PC-9 (cell line): ENCODE measurements at regions of chr17 and their contacts with region 1.

Region 1: GRCh38 chr17:16285957-16286640 is 67.2 kb downstream of the CENPV start:
- DNase-seq: peak; percentile 91 to 94
- H3K4me3 ChIP-seq: peak overlapping the region; percentile 45; the same call in 1 of the 2 replicates
- H3K27ac ChIP-seq: peak overlapping the region; percentile 98
- H3K4me1 ChIP-seq: peaks cover 75% of the 10 kb centered on the region
- H3K27me3 ChIP-seq: no peaks in the 10 kb centered on the region
- CTCF ChIP-seq: peak; percentile 71; the same call in 1 of the 2 replicates

Region 2: GRCh38 chr17:15659663-15660062 is 626.4 kb before region 1 on chr17:
- CTCF ChIA-PET with region 1: no interaction called
- POLR2A ChIA-PET with region 1: no interaction called
- intact Hi-C with region 1: loop called (anchors 5 kb)
- DNase-seq: peak; percentile 96 to 97
- H3K4me3 ChIP-seq: no peak overlapping the region; the same call in 1 of the 2 replicates
- H3K27ac ChIP-seq: peak overlapping the region; percentile 98
- H3K4me1 ChIP-seq: peaks cover 55% of the 10 kb centered on the region
- H3K27me3 ChIP-seq: no peaks in the 10 kb centered on the region
- CTCF ChIP-seq: no peak

Region 3: DNA sequence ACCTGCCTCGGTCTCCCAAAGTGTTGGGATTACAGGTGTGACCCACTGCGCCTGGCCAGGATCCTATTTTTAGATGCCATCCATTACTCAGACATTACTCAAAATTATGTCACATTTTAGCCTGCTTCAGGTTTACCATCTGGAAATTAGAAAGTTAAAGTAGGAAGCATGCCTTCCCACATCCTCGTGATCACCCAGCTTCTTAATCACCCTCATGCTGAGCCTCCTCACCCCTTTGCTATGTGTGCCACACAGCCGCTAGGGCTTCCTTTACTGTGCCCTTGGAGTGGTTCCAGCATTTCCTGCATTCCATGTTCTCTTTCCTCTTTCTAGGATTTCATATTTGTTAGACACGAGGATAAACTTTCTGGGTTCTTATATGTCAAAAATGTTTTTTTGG is 331.9 kb before region 1 on chr17:
- CTCF ChIA-PET with region 1: no interaction called
- POLR2A ChIA-PET with region 1: no interaction called
- intact Hi-C with region 1: loop called (anchors 5 kb)
- DNase-seq: peak; percentile 81 to 91
- H3K4me3 ChIP-seq: no peak overlapping the region
- H3K27ac ChIP-seq: peak overlapping the region; percentile 71
- H3K4me1 ChIP-seq: peaks cover 48% of the 10 kb centered on the region
- H3K27me3 ChIP-seq: no peaks in the 10 kb centered on the region
- CTCF ChIP-seq: no peak

Region 4: GRCh38 chr17:16297367-16298139 is 11.5 kb after region 1 on chr17:
- CTCF ChIA-PET with region 1: no interaction called
- POLR2A ChIA-PET with region 1: interaction called, 10 read pairs
- intact Hi-C with region 1: no loop called
- DNase-seq: no peak
- H3K4me3 ChIP-seq: no peak overlapping the region
- H3K27ac ChIP-seq: no peak overlapping the region
- H3K4me1 ChIP-seq: peaks cover 12% of the 10 kb centered on the region
- H3K27me3 ChIP-seq: no peaks in the 10 kb centered on the region
- CTCF ChIP-seq: no peak

Region 5: DNA sequence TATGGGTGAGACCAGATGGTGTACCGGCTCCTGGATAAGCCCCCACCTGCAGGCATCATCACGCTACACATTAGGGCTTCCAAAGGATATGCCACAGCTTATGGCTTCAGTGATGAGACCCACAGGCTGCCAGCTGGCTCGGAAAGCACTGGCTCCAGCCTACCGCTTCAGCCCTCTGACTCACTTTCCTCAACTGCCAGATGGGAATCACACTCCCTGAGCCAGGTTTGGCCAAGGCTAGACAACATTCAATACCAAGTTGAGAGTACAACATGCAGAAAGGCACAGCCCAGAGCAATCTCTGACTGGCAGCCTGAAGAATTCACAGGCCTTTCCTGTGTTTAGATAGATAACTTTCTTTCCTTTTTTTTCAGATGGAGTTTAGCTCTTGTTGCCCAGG is 56.9 kb after region 1 on chr17:
- CTCF ChIA-PET with region 1: no interaction called
- POLR2A ChIA-PET with region 1: no interaction called
- intact Hi-C with region 1: no loop called
- DNase-seq: no peak
- H3K4me3 ChIP-seq: no peak overlapping the region
- H3K27ac ChIP-seq: no peak overlapping the region
- H3K4me1 ChIP-seq: no peaks in the 10 kb centered on the region
- H3K27me3 ChIP-seq: no peaks in the 10 kb centered on the region
- CTCF ChIP-seq: no peak

Region 6: GRCh38 chr17:16380640-16381495 is 94.8 kb after region 1 on chr17 and contains the start of gene UBB:
- CTCF ChIA-PET with region 1: interaction called, 5 read pairs
- POLR2A ChIA-PET with region 1: interaction called, 14 read pairs
- intact Hi-C with region 1: loop called (anchors 1 kb)
- DNase-seq: peak; percentile 90 to 97
- H3K4me3 ChIP-seq: peak within 1 kb of the TSS; percentile 97
- H3K27ac ChIP-seq: peak within 1 kb of the TSS; percentile 87
- H3K4me1 ChIP-seq: peaks cover 31% of the 10 kb centered on the region
- H3K27me3 ChIP-seq: no peaks in the 10 kb centered on the region
- CTCF ChIP-seq: no peak
- total RNA-seq, gene UBB: 2,044 and 2,361 TPM in 2 replicates

Region 7: GRCh38 chr17:16438557-16439302 is 152.6 kb after region 1 on chr17:
- CTCF ChIA-PET with region 1: interaction called, 7 read pairs
- POLR2A ChIA-PET with region 1: interaction called, 6 read pairs
- intact Hi-C with region 1: loop called (anchors 5 kb)
- DNase-seq: peak; percentile 94 to 99
- H3K4me3 ChIP-seq: peak overlapping the region; percentile 98
- H3K27ac ChIP-seq: peak overlapping the region; percentile 88
- H3K4me1 ChIP-seq: peaks cover 20% of the 10 kb centered on the region
- H3K27me3 ChIP-seq: no peaks in the 10 kb centered on the region
- CTCF ChIP-seq: no peak

Region 8: GRCh38 chr17:17021194-17021863 is 735.2 kb after region 1 on chr17:
- CTCF ChIA-PET with region 1: no interaction called
- POLR2A ChIA-PET with region 1: no interaction called
- intact Hi-C with region 1: loop called (anchors 5 kb)
- DNase-seq: peak; percentile 94 to 95
- H3K4me3 ChIP-seq: peak overlapping the region; percentile 48
- H3K27ac ChIP-seq: peak overlapping the region; percentile 98
- H3K4me1 ChIP-seq: peaks cover 88% of the 10 kb centered on the region
- H3K27me3 ChIP-seq: no peaks in the 10 kb centered on the region
- CTCF ChIP-seq: no peak